Ascending aorta (tissue), 2 donors: ENCODE measurements at regions of chr12 and their contacts with region 1.

Region 1: GRCh38 chr12:7188562-7189397 is 706 bp upstream of the PEX5 start:
- DNase-seq: peak; percentile 33 to 88
- H3K4me3 ChIP-seq: peak overlapping the region; percentile 78 to 86
- H3K27ac ChIP-seq: peak overlapping the region; percentile 94 to 98
- H3K4me1 ChIP-seq: peaks cover 0 to 11% of the 10 kb centered on the region in 2 donors
- H3K27me3 ChIP-seq: no peaks in the 10 kb centered on the region
- CTCF ChIP-seq: peak; percentile 30 to 63 (median 59)

Region 2: DNA sequence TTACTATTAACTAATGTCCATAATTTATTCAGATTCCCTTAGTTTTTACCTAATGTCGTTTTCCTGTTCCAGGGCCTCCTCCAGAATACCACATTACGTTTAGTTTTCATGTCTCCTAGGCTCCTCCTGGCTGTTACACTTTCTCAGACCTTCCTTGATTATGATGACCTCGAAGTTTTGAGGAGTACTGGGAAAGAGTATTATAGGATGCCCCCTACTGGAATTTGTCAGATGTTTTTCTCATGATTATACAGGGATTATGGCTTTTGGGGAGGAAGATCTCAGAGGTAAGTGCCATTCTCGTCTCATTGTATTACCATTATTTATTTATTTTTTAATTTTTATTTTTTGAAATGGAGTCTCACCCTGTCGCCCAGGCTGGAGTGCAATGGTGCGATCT is 145.9 kb before region 1 on chr12:
- intact Hi-C with region 1: no loop called
- DNase-seq: no peak
- H3K4me3 ChIP-seq: no peak overlapping the region
- H3K27ac ChIP-seq: no peak overlapping the region
- H3K4me1 ChIP-seq: no peaks in the 10 kb centered on the region
- H3K27me3 ChIP-seq: no peaks in the 10 kb centered on the region
- CTCF ChIP-seq: peak in 2 of 3 experiments; percentile 30 to 41

Region 3: GRCh38 chr12:7129872-7130680 is 58.7 kb before region 1 on chr12 and contains the start of gene CLSTN3:
- intact Hi-C with region 1: loop called (anchors 1 kb)
- DNase-seq: peak; percentile 53 to 85
- H3K4me3 ChIP-seq: peak within 1 kb of the TSS; percentile 68 to 74
- H3K27ac ChIP-seq: peak within 1 kb of the TSS; percentile 79 to 84
- H3K4me1 ChIP-seq: peaks cover 6 to 7% of the 10 kb centered on the region in 2 donors
- H3K27me3 ChIP-seq: no peaks in the 10 kb centered on the region
- CTCF ChIP-seq: no peak
- total RNA-seq, gene CLSTN3: 132 TPM